ENCODE measurements at regions of chr1 and their contacts with region 1.

Region 1: DNA sequence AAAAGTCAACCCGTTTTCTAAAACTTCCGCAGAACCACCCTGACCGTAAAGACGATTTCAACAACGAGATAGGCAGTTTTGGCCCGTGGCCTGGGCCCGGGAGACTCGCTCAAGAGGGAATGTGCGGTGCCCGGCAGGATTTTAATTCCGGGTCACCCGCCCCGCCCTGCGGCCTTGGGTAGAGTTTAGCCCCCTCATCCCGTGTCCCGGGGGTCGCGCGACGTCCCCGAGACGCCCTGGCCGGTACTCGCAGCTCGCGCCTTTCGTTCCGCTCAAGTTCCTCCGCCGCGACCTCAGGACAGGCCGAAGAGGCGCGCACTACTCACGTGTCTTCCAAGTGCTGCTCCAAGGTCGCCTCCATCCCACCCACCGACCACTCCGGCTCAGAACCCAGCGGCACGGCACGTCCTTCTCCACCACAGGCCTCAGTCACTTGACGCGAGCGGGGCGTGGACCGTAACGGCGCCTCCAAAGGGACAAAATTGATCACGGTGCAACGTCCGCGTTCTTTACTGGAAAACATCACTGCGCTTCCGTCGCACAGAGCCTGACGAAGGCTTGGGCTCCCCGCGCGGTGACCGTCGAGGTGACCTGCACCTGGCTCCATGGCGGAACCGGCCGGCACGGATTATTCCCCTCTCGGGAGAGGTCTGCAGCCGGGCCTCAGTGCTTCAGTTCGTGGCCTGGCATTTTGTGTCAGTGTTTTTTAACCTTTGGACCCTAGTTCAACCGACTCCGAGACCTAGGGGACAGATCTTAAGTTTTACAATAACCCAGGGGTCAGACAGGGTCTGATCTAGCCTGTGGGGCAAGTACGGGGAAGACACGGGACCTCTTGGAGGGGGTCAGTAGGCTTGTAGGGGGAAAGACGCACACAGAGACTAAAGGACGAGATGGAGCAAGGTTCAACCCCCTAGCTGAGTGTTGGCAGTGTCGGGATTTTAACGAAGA is at the start of gene LAMTOR5:
- DNase-seq: peak; percentile 95
- ATAC-seq: peak; percentile 91
- H3K4me3 ChIP-seq: peak within 1 kb of the TSS; percentile 92
- H3K27ac ChIP-seq: peak within 1 kb of the TSS; percentile 66
- H3K4me1 ChIP-seq: peaks cover 8% of the 10 kb centered on the region; the same call in 1 of the 2 replicates
- H3K27me3 ChIP-seq: no peaks in the 10 kb centered on the region
- CTCF ChIP-seq: no peak
- total RNA-seq, gene LAMTOR5: 143 and 147 TPM in 2 replicates

Region 2: DNA sequence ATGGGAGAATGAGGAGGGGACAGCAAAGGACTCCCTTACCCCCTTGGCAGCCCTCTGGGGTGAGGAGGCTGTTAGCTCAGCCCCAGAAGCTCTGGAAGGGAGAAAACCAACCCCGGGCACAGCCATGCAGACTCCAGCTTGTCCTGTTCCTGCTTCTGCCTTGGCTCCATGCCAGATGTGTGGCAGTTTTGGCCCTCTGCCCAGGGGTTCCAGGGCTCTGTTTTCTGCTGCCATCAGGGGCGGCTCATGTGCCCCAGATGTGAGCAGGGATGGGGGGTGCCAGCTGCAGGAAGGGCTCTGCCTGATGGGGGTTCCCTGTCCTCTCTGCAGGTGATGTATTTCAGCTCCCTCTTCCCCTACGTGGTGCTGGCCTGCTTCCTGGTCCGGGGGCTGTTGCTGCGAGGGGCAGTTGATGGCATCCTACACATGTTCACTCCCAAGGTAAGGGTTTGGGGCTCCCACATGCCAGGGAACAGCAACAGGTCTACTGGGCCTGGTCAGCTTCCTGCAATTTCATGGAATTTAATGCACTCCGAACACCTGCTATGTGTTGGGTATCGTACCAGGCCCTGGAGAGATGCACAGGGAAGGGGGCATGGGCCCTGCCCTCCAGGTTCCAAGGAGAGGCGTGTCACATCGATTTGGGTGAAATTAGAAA is 231.1 kb before region 1 on chr1:
- CTCF ChIA-PET with region 1: no interaction called
- POLR2A ChIA-PET with region 1: no interaction called
- intact Hi-C with region 1: no loop called
- DNase-seq: no peak
- ATAC-seq: no peak
- H3K4me3 ChIP-seq: no peak overlapping the region
- H3K27ac ChIP-seq: no peak overlapping the region
- H3K4me1 ChIP-seq: no peaks in the 10 kb centered on the region
- H3K27me3 ChIP-seq: peaks cover 49% of the 10 kb centered on the region
- CTCF ChIP-seq: no peak

Region 3: DNA sequence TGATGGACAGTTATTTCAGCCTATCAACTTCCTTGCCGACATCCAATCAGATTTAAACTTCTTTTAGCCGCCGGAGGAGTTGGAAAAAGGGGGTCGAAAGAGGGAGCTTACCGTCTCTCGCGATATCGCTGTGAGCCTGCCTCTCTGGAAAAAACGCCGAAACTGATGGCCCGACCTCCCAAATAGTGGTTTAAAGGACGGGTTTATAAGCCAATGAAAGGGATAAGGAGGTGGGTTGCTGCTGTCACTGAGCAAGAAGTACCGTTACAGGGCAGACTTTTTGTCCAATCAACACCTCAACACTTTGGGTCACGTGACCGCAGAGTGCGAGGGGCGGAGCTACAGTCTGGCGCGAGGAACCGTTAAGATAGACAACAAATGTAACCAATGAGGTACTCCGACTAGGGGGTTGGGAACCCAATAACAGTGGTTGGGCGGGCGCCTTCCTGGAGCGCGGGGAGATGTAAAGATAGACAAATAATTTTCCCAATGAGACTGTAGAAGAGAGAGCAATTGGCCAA is 68.6 kb before region 1 on chr1 and contains the start of gene RBM15:
- CTCF ChIA-PET with region 1: no interaction called
- POLR2A ChIA-PET with region 1: no interaction called
- intact Hi-C with region 1: loop called (anchors 2 kb)
- DNase-seq: peak; percentile 100
- ATAC-seq: peak; percentile 76
- H3K4me3 ChIP-seq: peak within 1 kb of the TSS; percentile 92
- H3K27ac ChIP-seq: peak within 1 kb of the TSS; percentile 95
- H3K4me1 ChIP-seq: peaks cover 41% of the 10 kb centered on the region
- H3K27me3 ChIP-seq: no peaks in the 10 kb centered on the region
- CTCF ChIP-seq: no peak
- total RNA-seq, gene RBM15: 41.3 and 47.0 TPM in 2 replicates

Region 4: GRCh38 chr1:110356405-110356804 is 51.1 kb before region 1 on chr1:
- CTCF ChIA-PET with region 1: no interaction called
- POLR2A ChIA-PET with region 1: no interaction called
- intact Hi-C with region 1: loop called (anchors 1 kb)
- DNase-seq: peak; percentile 93
- ATAC-seq: peak; percentile 95
- H3K4me3 ChIP-seq: no peak overlapping the region; the same call in 1 of the 2 replicates
- H3K27ac ChIP-seq: no peak overlapping the region
- H3K4me1 ChIP-seq: peaks cover 23% of the 10 kb centered on the region
- H3K27me3 ChIP-seq: no peaks in the 10 kb centered on the region
- CTCF ChIP-seq: no peak

Region 5: DNA sequence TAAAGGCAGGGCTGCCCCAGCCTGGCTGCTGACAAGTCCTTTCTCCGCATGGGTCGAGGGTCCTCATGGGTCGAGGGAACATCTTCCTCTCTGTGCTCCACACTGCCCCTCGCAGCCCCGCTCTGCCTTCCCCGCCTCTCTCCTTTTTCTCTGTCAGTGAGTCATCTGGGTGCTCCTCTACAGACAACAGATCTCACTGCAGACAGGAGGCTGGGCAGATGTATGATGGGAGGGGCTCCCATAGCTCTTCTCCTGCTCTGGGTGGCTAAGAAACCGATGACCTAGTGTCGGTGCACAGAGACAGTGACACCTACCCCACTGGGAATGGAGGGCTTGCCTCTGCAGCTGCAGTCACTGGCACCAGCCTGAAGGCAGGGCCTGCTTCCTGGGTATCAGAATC is 106.0 kb after region 1 on chr1:
- CTCF ChIA-PET with region 1: no interaction called
- POLR2A ChIA-PET with region 1: no interaction called
- intact Hi-C with region 1: no loop called
- DNase-seq: peak; percentile 11
- ATAC-seq: peak; percentile 84
- H3K4me3 ChIP-seq: no peak overlapping the region
- H3K27ac ChIP-seq: no peak overlapping the region
- H3K4me1 ChIP-seq: no peaks in the 10 kb centered on the region
- H3K27me3 ChIP-seq: peaks cover 19% of the 10 kb centered on the region
- CTCF ChIP-seq: no peak